ENCODE measurements at regions of chr22 and their contacts with region 1.

Region 1: DNA sequence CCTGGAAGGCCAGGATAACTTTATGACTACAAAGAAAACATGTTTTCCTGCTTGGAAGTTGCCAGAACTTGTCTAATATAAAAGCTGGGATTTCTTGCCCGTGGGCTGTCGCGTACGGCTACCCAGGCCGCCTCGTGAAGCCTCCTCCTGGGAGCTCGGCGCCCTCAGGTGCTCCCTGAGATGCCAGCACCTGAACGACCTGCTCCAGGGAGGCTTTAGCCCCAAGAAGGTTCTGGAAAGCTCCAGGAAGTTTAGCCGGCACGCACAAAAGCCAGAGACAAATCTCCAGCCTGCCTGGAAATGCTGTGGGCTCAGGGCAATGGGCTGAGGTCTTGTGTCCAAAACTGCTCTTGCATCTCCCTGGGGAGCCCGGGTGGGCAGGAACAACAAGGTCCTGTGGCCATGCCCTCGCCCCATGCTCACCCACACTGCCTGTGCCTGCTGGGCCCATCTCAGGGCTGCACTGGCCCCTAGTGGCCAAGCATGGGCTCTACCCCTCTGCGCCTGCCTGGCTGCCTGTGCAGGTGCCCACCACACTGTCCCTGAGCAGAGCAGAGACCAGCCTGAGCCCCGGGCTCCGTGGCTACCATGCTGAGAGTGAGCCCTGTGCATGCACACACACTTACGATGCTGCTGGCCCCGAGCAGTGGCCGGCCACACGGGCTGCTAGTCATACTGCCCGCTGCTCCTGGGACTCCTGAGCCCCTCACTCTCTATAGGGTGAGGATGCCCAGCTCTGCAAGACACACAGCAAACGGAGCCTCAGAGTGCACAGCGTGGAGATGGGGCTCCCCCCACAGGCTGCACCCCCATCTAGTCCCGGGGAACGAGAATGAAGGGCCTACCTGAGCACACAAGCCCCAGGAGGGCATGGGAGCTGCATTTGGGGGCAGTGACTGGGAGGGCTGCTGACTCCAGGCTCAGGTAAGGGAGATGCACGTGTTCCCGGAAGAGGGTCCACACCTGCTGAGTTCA is 4.9 kb upstream of the CELSR1 start:
- DNase-seq: peak; percentile 77 to 88
- H3K4me3 ChIP-seq: no peak overlapping the region
- H3K4me3 Mint-ChIP-seq: no peak overlapping the region
- H3K27ac Mint-ChIP-seq: no peak overlapping the region
- H3K4me1 ChIP-seq: peaks cover 26% of the 10 kb centered on the region
- H3K4me1 Mint-ChIP-seq: peaks cover 12% of the 10 kb centered on the region
- H3K27me3 ChIP-seq: no peaks in the 10 kb centered on the region
- H3K27me3 Mint-ChIP-seq: no peaks in the 10 kb centered on the region
- CTCF ChIP-seq: peak; percentile 92 to 97

Region 2: DNA sequence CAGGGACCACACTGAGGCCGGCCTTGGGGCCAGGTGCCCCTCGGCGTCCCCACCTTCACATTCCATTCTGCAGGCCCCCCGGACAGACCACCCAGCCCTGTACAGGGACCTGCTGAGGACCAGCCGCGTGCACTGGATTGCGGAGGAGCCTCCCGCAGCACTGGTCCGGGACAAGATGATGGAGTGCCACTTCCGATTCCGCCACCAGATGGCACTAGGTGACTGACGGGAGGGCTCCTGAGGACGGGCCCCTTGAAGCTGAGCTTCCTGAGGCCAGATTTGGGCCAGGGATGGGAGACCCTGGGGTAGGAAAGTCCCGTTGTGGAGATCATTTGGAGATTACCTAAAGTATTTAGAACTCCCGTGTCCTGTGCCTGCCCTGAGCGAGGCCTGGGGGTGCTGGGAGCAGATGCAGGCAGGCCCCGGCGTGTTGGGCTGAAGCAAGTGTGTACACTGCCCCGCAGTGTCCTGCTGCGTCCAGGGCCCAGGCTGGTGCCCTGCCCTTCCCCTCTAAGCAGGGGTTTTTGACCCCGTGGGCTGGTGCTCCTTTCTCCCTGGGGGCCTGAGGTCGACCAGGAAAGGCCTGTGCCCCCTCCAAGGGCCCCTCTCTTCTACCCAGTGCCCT is 186.8 kb before region 1 on chr22:
- CTCF ChIA-PET with region 1: interaction called, 10 read pairs
- POLR2A ChIA-PET with region 1: no interaction called
- intact Hi-C with region 1: loop called (anchors 1 kb)
- DNase-seq: peak; percentile 75 to 83
- H3K4me3 ChIP-seq: no peak overlapping the region
- H3K4me3 Mint-ChIP-seq: no peak overlapping the region
- H3K27ac Mint-ChIP-seq: peak overlapping the region; percentile 57
- H3K4me1 ChIP-seq: no peaks in the 10 kb centered on the region
- H3K4me1 Mint-ChIP-seq: no peaks in the 10 kb centered on the region
- H3K27me3 ChIP-seq: no peaks in the 10 kb centered on the region
- H3K27me3 Mint-ChIP-seq: no peaks in the 10 kb centered on the region
- CTCF ChIP-seq: peak; percentile 82 to 85

Region 3: DNA sequence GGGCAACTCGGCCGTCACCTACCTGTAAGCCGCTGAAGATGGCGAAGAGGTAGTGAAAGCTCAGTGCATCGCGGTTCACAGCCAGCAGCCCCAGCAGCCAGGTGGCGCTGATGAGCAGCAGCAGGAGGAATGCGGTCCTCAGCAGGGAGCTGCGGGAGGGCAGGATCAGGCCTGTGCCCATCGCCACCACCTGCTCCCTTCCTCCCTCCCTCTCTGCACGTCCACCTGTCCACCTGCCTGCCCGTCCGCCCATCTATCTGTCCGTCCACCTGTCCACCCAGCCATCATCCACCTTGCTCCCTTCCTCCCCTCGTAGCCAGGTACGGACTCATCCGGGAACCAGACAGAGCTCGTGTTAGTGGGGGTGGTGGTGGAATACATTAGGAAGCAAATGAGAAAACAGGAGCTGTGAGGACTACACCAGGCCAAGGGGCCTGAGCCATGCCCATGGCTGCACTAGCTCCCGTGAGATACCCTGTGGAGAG is 174.5 kb before region 1 on chr22:
- CTCF ChIA-PET with region 1: interaction called, 16 read pairs
- POLR2A ChIA-PET with region 1: no interaction called
- intact Hi-C with region 1: no loop called
- DNase-seq: peak in 1 of 2 experiments; percentile 73
- H3K4me3 ChIP-seq: no peak overlapping the region
- H3K4me3 Mint-ChIP-seq: no peak overlapping the region
- H3K27ac Mint-ChIP-seq: no peak overlapping the region
- H3K4me1 ChIP-seq: peaks cover 23% of the 10 kb centered on the region
- H3K4me1 Mint-ChIP-seq: peaks cover 26% of the 10 kb centered on the region
- H3K27me3 ChIP-seq: no peaks in the 10 kb centered on the region
- H3K27me3 Mint-ChIP-seq: no peaks in the 10 kb centered on the region
- CTCF ChIP-seq: peak; percentile 79 to 81

Region 4: GRCh38 chr22:46484861-46485595 is 57.3 kb before region 1 on chr22:
- CTCF ChIA-PET with region 1: no interaction called
- POLR2A ChIA-PET with region 1: no interaction called
- intact Hi-C with region 1: loop called (anchors 5 kb)
- DNase-seq: no peak
- H3K4me3 ChIP-seq: no peak overlapping the region
- H3K4me3 Mint-ChIP-seq: peak overlapping the region; percentile 5
- H3K27ac Mint-ChIP-seq: peak overlapping the region; percentile 32
- H3K4me1 ChIP-seq: peaks cover 16% of the 10 kb centered on the region
- H3K4me1 Mint-ChIP-seq: peaks cover 7% of the 10 kb centered on the region
- H3K27me3 ChIP-seq: no peaks in the 10 kb centered on the region
- H3K27me3 Mint-ChIP-seq: no peaks in the 10 kb centered on the region
- CTCF ChIP-seq: no peak

Measured in Caco-2 (cell line).